Prostate gland (tissue), 2 donors: ENCODE measurements at regions of chr11 and their contacts with region 1.

Region 1: DNA sequence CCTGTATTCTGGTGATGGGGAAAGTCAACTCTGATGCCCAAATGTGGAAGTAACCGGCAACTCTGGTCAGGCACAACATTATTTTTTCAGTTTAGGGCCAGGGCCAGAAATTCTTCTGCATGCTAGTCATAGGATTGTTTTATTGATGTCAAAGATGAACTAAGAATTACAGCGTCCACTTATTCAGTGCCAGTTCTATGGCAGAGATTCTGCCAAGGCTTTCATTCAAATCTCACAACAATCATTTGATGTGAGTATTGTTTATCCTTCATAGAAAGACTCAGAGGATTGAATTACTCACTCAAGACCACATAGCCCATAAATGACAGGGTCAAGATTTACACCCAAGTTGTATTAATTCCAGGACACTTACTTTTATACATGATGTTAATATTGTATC is 87.7 kb downstream of the TMPRSS5 start:
- DNase-seq: no peak
- H3K4me3 ChIP-seq: no peak overlapping the region
- H3K27ac ChIP-seq: no peak overlapping the region
- H3K4me1 ChIP-seq: no peaks in the 10 kb centered on the region
- H3K27me3 ChIP-seq: no peaks in the 10 kb centered on the region
- CTCF ChIP-seq: no peak
- POLR2A ChIP-seq: no peak

Region 2: GRCh38 chr11:113314389-113315301 is 303.7 kb before region 1 on chr11 and contains the start of gene TTC12:
- intact Hi-C with region 1: loop called (anchors 2 kb)
- DNase-seq: peak; percentile 89
- H3K4me3 ChIP-seq: peak within 1 kb of the TSS; percentile 54 to 72
- H3K27ac ChIP-seq: peak within 1 kb of the TSS; percentile 85 to 89
- H3K4me1 ChIP-seq: peaks cover 4% of the 10 kb centered on the region
- H3K27me3 ChIP-seq: no peaks in the 10 kb centered on the region
- CTCF ChIP-seq: no peak
- POLR2A ChIP-seq: peak; percentile 58
- total RNA-seq, gene TTC12: 21.6 TPM

Region 3: GRCh38 chr11:113555071-113555619 is 63.2 kb before region 1 on chr11:
- intact Hi-C with region 1: loop called (anchors 5 kb)
- DNase-seq: no peak
- H3K4me3 ChIP-seq: no peak overlapping the region
- H3K27ac ChIP-seq: no peak overlapping the region
- H3K4me1 ChIP-seq: no peaks in the 10 kb centered on the region
- H3K27me3 ChIP-seq: no peaks in the 10 kb centered on the region
- CTCF ChIP-seq: no peak
- POLR2A ChIP-seq: no peak